ENCODE measurements at regions of chr6 and their contacts with region 1.

Region 1: DNA sequence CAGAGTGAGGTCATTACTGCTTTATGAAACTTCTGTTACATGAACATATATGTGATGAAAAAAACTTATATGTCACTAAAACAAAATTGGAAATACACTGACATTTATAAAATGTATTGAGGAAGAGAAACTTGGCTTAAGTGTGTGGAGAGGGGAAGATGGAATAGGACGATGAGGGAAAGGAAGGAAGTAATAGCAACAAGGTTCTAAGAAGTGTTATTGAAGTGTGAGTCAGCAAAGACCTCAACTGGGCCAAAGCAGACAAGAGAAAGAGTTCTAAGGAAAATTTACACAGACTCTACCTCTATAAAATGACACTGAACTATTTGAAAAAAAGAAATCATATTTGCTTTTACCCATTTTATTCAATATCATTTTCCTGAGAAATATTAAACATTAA is 38.3 kb downstream of the SNX3 start:
- DNase-seq: peak; percentile 8 to 54 (median 46)
- H3K4me3 ChIP-seq: no peak overlapping the region
- H3K27ac ChIP-seq: no peak overlapping the region
- H3K4me1 ChIP-seq: peaks cover 0 to 17% (median 6%) of the 10 kb centered on the region in 4 experiments
- H3K27me3 ChIP-seq: no peaks in the 10 kb centered on the region

Region 2: GRCh38 chr6:108200631-108201030 is 21.9 kb before region 1 on chr6:
- CTCF ChIA-PET with region 1: no interaction called
- POLR2A ChIA-PET with region 1: interaction called, 10 read pairs
- DNase-seq: no peak
- H3K4me3 ChIP-seq: no peak overlapping the region
- H3K27ac ChIP-seq: no peak overlapping the region
- H3K4me1 ChIP-seq: no peaks in the 10 kb centered on the region
- H3K27me3 ChIP-seq: no peaks in the 10 kb centered on the region

Region 3: DNA sequence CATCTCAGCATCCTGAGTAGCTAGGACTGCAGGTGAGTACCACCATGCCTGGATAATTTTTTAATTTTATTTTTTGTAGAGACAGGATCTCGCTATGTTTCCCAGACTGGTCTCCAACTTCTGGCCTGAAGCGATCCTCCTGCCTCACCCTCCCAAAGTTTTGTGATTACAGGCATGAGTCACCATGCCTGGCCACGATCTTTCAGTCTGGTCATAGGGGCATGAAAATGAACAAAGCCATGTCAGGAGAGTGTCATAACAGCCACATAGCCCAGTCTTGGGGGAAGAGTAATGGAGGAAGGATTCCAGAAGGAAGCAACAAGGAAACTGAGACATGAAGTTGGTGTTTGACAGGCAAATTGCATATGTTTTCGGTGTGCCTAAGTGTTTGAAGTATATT is 55.3 kb after region 1 on chr6:
- CTCF ChIA-PET with region 1: no interaction called
- POLR2A ChIA-PET with region 1: no interaction called
- DNase-seq: no peak
- H3K4me3 ChIP-seq: no peak overlapping the region
- H3K27ac ChIP-seq: no peak overlapping the region
- H3K4me1 ChIP-seq: no peaks in the 10 kb centered on the region
- H3K27me3 ChIP-seq: no peaks in the 10 kb centered on the region

Region 4: DNA sequence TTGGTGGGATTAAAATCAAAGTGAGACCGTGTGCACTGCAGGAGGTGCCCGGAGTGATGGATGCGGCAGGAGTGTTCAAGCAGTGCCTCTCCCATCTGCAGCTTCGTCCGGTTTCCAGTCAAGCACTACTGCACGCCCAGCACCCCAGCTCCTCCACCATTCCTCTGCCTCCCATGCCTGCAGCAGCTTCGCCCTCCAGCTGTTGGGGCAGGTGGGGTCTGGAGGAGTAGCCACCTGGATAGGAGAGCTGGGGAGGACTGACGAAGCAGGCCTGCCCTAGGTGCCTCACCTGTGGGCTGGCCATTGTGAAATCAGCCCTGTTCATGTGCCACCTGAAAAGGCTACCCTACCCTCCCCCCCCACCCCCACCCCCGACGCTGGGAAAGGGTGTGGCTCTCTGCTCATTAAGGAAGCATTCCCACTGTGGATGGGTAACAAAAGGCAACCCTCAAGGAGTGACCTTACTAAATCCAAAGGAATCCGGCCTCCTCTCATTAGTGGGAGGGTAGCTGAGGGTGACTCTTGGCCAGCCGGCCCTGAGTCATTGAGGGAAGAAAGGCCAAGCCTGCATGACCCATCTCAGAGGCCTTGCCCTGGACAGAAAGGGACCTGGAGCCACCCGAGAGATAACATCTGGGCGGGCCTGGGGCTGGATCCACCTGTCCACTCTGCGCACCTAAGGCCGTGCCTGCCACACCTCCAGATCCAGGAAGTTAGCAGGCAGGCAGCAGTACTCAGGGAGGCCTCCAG is 509.8 kb after region 1 on chr6:
- CTCF ChIA-PET with region 1: no interaction called
- POLR2A ChIA-PET with region 1: no interaction called
- DNase-seq: no peak
- H3K4me3 ChIP-seq: no peak overlapping the region
- H3K27ac ChIP-seq: no peak overlapping the region
- H3K4me1 ChIP-seq: peaks cover 0 to 8% (median under 1%) of the 10 kb centered on the region in 4 experiments
- H3K27me3 ChIP-seq: no peaks in the 10 kb centered on the region

Measured in common myeloid progenitor, CD34-positive (primary cell).